ENCODE measurements at regions of chr13 and their contacts with region 1.

Region 1: GRCh38 chr13:104773775-104774174 is 1707.6 kb upstream of the SLC10A2 start:
- DNase-seq: no peak
- ATAC-seq: peak; percentile 44
- H3K4me3 Mint-ChIP-seq: no peak overlapping the region
- H3K27ac Mint-ChIP-seq: no peak overlapping the region
- H3K4me1 Mint-ChIP-seq: no peaks in the 10 kb centered on the region
- H3K27me3 Mint-ChIP-seq: no peaks in the 10 kb centered on the region

Region 2: GRCh38 chr13:105202354-105202753 is 428.6 kb after region 1 on chr13:
- CTCF ChIA-PET with region 1: no interaction called
- POLR2A ChIA-PET with region 1: no interaction called
- intact Hi-C with region 1: loop called (anchors 2 to 10 kb)
- DNase-seq: no peak
- ATAC-seq: no peak
- H3K4me3 Mint-ChIP-seq: no peak overlapping the region
- H3K27ac Mint-ChIP-seq: no peak overlapping the region
- H3K4me1 Mint-ChIP-seq: no peaks in the 10 kb centered on the region
- H3K27me3 Mint-ChIP-seq: peaks cover 9% of the 10 kb centered on the region

Region 3: GRCh38 chr13:105389373-105389772 is 615.6 kb after region 1 on chr13:
- CTCF ChIA-PET with region 1: no interaction called
- POLR2A ChIA-PET with region 1: no interaction called
- intact Hi-C with region 1: no loop called
- DNase-seq: no peak
- ATAC-seq: no peak
- H3K4me3 Mint-ChIP-seq: no peak overlapping the region
- H3K27ac Mint-ChIP-seq: no peak overlapping the region
- H3K4me1 Mint-ChIP-seq: no peaks in the 10 kb centered on the region
- H3K27me3 Mint-ChIP-seq: no peaks in the 10 kb centered on the region

Region 4: GRCh38 chr13:105579821-105580710 is 806.3 kb after region 1 on chr13:
- CTCF ChIA-PET with region 1: no interaction called
- POLR2A ChIA-PET with region 1: no interaction called
- intact Hi-C with region 1: no loop called
- DNase-seq: no peak
- ATAC-seq: peak; percentile 71
- H3K4me3 Mint-ChIP-seq: no peak overlapping the region
- H3K27ac Mint-ChIP-seq: peak overlapping the region; percentile 6
- H3K4me1 Mint-ChIP-seq: no peaks in the 10 kb centered on the region
- H3K27me3 Mint-ChIP-seq: no peaks in the 10 kb centered on the region